PC-3 (cell line): ENCODE measurements at regions of chr3 and their contacts with region 1.

Region 1: DNA sequence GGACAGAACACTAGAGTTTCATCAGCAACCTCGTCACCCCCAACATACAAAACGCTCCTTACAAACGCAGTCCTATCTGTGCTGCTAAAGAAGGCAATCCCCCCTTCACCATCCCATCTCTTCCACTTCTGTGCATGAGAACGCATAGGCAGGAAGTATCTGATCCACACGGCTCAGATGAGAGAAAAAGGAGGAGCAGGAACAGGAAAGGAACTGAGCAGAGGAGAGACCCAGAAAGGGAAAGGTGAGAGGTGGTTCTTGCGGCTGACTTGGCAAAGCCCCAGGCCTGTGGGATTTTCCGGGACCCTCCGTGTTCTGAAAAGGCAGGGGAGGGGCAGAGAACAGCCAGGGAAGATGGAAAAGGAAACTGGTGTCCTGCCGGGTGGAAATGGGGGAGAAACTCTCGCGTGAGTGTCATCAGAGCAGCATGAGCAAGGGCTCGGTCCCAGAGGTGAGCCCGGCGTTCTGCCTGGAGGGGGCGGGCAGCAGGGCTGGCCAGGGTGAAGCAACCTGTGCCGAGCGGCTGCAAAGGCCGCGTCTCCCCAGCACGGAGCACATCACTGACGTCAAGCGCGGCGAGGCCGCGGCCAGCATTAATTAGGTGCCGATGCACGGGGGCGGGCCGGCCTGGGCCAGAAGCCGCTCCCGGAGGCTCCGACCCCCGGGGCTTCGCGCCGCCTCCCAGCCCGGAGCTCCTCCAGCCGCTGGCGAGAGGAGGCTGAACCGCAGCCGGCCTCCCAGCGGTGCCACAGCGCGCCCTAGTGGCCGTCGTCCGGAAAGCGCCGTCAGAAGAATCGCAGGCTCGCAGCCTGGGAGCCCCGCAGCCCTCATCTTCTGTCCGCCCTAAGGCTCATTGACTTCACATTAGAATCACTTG is 35.8 kb downstream of the CPN2 start:
- DNase-seq: peak; percentile 89
- ATAC-seq: peak; percentile 73
- H3K4me3 ChIP-seq: peak overlapping the region; percentile 64
- H3K27ac ChIP-seq: no peak overlapping the region
- H3K4me1 ChIP-seq: peaks cover 32% of the 10 kb centered on the region
- H3K27me3 ChIP-seq: no peaks in the 10 kb centered on the region
- CTCF ChIP-seq: peak; percentile 93

Region 2: GRCh38 chr3:193470710-193471109 is 844.6 kb before region 1 on chr3:
- CTCF ChIA-PET with region 1: no interaction called
- POLR2A ChIA-PET with region 1: no interaction called
- intact Hi-C with region 1: no loop called
- DNase-seq: no peak
- ATAC-seq: no peak
- H3K4me3 ChIP-seq: no peak overlapping the region
- H3K27ac ChIP-seq: no peak overlapping the region
- H3K4me1 ChIP-seq: no peaks in the 10 kb centered on the region
- H3K27me3 ChIP-seq: peaks cover 69% of the 10 kb centered on the region
- CTCF ChIP-seq: no peak

Region 3: GRCh38 chr3:193665370-193665989 is 649.8 kb before region 1 on chr3:
- CTCF ChIA-PET with region 1: interaction called, 16 read pairs
- POLR2A ChIA-PET with region 1: no interaction called
- intact Hi-C with region 1: loop called (anchors 5 kb)
- DNase-seq: peak; percentile 63
- ATAC-seq: no peak
- H3K4me3 ChIP-seq: no peak overlapping the region
- H3K27ac ChIP-seq: no peak overlapping the region
- H3K4me1 ChIP-seq: no peaks in the 10 kb centered on the region
- H3K27me3 ChIP-seq: no peaks in the 10 kb centered on the region
- CTCF ChIP-seq: peak; percentile 75

Region 4: GRCh38 chr3:194070634-194071409 is 244.5 kb before region 1 on chr3:
- CTCF ChIA-PET with region 1: no interaction called
- POLR2A ChIA-PET with region 1: no interaction called
- intact Hi-C with region 1: loop called (anchors 10 kb)
- DNase-seq: peak; percentile 93
- ATAC-seq: peak; percentile 80
- H3K4me3 ChIP-seq: peak overlapping the region; percentile 60
- H3K27ac ChIP-seq: no peak overlapping the region
- H3K4me1 ChIP-seq: peaks cover 35% of the 10 kb centered on the region
- H3K27me3 ChIP-seq: no peaks in the 10 kb centered on the region
- CTCF ChIP-seq: no peak

Region 5: GRCh38 chr3:194141415-194142155 is 173.7 kb before region 1 on chr3:
- CTCF ChIA-PET with region 1: interaction called, 42 read pairs
- POLR2A ChIA-PET with region 1: interaction called, 17 read pairs
- intact Hi-C with region 1: loop called (anchors 1 kb)
- DNase-seq: peak; percentile 94
- ATAC-seq: peak; percentile 44
- H3K4me3 ChIP-seq: peak overlapping the region; percentile 53
- H3K27ac ChIP-seq: peak overlapping the region; percentile 87
- H3K4me1 ChIP-seq: peaks cover 45% of the 10 kb centered on the region
- H3K27me3 ChIP-seq: no peaks in the 10 kb centered on the region
- CTCF ChIP-seq: no peak

Region 6: DNA sequence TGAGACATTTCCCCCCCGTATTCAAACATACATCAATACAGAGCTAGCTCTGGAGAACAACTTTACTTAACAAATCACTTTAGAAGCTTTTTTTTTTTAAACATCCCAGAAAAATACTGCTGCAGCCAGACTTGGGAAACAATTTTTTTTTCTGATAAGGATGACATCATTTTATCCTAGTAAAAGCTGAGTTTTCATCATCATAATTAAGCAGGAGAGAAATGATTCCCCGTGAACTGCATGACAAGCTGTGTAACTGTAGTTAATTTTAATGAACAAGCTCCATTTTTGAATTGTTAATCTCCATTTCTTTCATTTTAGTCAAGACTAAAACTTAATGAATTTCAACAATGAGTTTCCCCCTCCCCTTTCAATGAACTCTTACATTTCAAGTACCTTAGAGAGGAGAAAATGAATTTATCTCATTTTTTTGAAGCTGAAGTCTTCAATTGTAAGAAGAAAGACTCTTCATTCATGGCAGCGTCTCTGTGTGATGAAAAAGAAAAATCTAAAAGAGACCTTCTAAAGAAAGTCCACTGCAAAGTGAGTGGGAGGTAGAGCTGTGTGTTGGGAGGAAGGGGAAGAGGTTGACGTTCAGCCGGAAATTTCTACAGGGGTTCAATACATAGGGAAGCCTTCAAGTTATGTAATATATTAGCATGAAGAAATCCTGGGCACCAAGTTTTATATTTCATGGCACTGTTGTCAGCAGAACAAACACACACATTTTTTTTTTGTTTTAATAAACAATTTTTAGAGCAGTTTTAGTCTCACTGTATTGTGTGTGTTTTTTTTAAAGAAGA is 147.6 kb before region 1 on chr3:
- CTCF ChIA-PET with region 1: interaction called, 8 read pairs
- POLR2A ChIA-PET with region 1: no interaction called
- intact Hi-C with region 1: loop called (anchors 1 kb)
- DNase-seq: no peak
- ATAC-seq: no peak
- H3K4me3 ChIP-seq: no peak overlapping the region
- H3K27ac ChIP-seq: no peak overlapping the region
- H3K4me1 ChIP-seq: 0 out of 2 replicates have a peak, but pooled peaks cover 6% of the 10 kb centered on the region
- H3K27me3 ChIP-seq: no peaks in the 10 kb centered on the region
- CTCF ChIP-seq: no peak

Region 7: DNA sequence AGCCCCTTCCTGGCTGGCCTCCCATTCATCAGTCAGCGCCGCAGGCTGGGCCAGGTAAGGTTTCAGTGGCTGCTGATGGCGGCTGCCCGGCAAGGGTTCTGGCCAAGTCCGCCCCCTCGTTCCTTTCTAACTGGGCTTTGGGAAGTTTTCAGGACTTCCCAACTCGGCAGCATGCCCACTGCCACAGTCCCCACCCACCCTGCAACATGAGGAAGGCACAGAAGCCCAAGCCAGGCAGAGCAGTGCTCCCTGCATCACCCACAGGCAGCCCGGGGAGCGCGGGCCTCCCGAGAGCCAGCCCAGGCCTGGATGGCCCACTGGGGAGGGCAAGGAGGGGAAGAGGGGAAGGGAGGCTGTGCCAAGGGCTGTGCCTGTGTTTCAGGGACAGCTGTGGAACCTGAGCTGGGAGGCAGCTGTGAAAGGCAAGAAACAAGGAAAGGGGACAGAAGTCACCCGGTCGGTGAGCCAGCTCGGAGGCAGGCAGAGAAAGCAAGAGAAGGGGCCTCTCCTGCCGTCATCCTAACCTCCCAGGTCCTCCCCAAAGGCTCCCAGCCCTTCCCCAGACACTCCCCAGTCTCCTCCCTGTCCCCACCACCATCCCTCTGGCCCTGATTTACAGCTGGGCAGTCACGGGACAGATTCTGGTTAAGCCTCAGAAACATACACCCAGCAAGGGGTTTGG is 38.1 kb before region 1 on chr3:
- CTCF ChIA-PET with region 1: no interaction called
- POLR2A ChIA-PET with region 1: no interaction called
- intact Hi-C with region 1: loop called (anchors 5 kb)
- DNase-seq: no peak
- ATAC-seq: no peak
- H3K4me3 ChIP-seq: no peak overlapping the region
- H3K27ac ChIP-seq: no peak overlapping the region
- H3K4me1 ChIP-seq: no peaks in the 10 kb centered on the region
- H3K27me3 ChIP-seq: no peaks in the 10 kb centered on the region
- CTCF ChIP-seq: no peak

Region 8: DNA sequence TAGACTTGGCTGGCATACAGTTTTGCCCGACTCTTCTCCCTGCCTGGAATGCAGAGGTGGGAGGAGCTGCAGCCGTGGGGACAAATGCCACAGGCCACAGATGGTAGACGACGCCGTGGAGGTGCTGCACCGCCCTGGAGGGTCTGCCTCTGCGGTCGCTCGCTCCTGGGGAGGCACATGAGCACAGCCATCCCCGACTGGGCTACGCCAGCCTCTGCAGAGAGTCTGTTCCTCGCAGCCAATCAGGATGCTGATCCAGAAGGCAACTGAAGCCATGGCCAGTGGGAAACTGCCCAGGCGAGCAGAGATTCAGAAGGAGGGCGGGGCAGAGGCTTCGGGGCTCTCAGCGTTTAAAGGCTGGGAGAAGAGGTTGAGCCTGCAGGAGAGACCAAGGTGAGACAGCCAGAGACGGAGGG is 66.1 kb after region 1 on chr3:
- CTCF ChIA-PET with region 1: no interaction called
- POLR2A ChIA-PET with region 1: no interaction called
- intact Hi-C with region 1: no loop called
- DNase-seq: peak; percentile 14
- ATAC-seq: peak; percentile 56
- H3K4me3 ChIP-seq: no peak overlapping the region
- H3K27ac ChIP-seq: no peak overlapping the region
- H3K4me1 ChIP-seq: no peaks in the 10 kb centered on the region
- H3K27me3 ChIP-seq: no peaks in the 10 kb centered on the region
- CTCF ChIP-seq: no peak